PC-9 (cell line): ENCODE measurements at regions of chr13 and their contacts with region 1.

Region 1: DNA sequence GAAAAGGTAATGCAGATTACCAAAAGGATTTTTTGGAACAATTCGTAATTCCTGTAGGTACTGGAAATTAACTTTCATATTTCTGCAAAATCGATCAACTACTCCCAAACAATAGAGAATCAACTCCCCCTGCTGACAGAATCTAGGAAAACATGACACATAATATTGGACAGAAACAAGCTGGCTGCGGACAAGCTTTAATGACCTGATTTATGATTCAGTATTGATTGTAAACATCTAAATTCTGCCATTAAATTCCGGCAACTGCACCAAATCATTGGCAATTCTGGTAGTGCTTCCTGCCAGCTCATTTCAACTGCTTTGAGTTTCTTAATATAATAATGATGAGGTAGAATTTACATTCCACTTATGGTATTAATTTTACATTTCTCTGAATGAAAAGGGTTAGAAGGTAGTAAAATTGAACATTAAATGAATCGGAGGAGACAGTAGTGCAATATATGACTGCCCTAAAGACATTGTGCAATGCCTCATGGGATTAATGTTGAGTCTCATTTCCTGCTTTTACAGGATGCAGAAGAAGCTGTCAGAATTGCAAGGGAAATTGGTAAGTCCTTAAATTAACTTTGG is 146.5 kb downstream of the PCCA start:
- DNase-seq: peak; percentile 6 to 39
- H3K4me3 ChIP-seq: no peak overlapping the region
- H3K27ac ChIP-seq: no peak overlapping the region
- H3K4me1 ChIP-seq: peaks cover 5% of the 10 kb centered on the region; the same call in 1 of the 2 replicates
- H3K27me3 ChIP-seq: no peaks in the 10 kb centered on the region
- CTCF ChIP-seq: peak; percentile 88

Region 2: DNA sequence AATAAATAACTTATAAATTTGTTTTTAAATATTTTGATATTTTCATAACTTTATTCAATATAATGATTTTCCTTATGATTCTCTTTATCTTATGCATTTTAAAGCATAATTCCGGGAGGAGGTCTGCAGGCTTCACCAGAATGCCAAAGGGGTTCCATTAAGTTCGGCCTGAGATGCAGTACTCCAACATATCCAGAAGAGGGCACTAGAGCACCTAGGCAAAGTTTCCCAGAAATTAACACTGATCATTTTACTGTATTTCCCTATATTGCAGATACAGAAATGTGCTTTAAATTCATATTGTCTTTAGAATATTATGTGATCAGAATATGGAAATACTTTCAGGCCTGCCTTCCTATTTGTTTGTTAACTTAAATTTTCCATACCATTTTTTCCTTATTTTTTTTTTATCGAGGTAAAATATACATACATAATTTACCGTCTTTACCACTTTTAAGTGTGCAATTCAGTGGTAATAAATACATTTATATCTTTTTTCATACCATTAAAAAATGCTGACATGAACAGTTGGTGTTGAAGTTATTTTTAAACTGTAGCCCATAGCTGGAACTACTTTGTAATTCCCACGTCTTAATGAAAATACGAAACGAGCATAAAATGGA is 793.0 kb before region 1 on chr13:
- CTCF ChIA-PET with region 1: no interaction called
- POLR2A ChIA-PET with region 1: no interaction called
- intact Hi-C with region 1: loop called (anchors 5 kb)
- DNase-seq: peak; percentile 42 to 49
- H3K4me3 ChIP-seq: no peak overlapping the region
- H3K27ac ChIP-seq: no peak overlapping the region
- H3K4me1 ChIP-seq: peaks cover 19% of the 10 kb centered on the region
- H3K27me3 ChIP-seq: no peaks in the 10 kb centered on the region
- CTCF ChIP-seq: peak; percentile 96

Region 3: GRCh38 chr13:99656092-99656745 is 579.2 kb before region 1 on chr13:
- CTCF ChIA-PET with region 1: no interaction called
- POLR2A ChIA-PET with region 1: no interaction called
- intact Hi-C with region 1: loop called (anchors 2 kb)
- DNase-seq: peak; percentile 53 to 60
- H3K4me3 ChIP-seq: no peak overlapping the region
- H3K27ac ChIP-seq: no peak overlapping the region
- H3K4me1 ChIP-seq: no peaks in the 10 kb centered on the region
- H3K27me3 ChIP-seq: no peaks in the 10 kb centered on the region
- CTCF ChIP-seq: peak; percentile 96

Region 4: GRCh38 chr13:99916366-99917103 is 318.9 kb before region 1 on chr13:
- CTCF ChIA-PET with region 1: interaction called, 5 read pairs
- POLR2A ChIA-PET with region 1: no interaction called
- intact Hi-C with region 1: loop called (anchors 1 kb)
- DNase-seq: peak; percentile 34 to 71
- H3K4me3 ChIP-seq: no peak overlapping the region
- H3K27ac ChIP-seq: no peak overlapping the region
- H3K4me1 ChIP-seq: no peaks in the 10 kb centered on the region
- H3K27me3 ChIP-seq: no peaks in the 10 kb centered on the region
- CTCF ChIP-seq: peak; percentile 95

Region 5: DNA sequence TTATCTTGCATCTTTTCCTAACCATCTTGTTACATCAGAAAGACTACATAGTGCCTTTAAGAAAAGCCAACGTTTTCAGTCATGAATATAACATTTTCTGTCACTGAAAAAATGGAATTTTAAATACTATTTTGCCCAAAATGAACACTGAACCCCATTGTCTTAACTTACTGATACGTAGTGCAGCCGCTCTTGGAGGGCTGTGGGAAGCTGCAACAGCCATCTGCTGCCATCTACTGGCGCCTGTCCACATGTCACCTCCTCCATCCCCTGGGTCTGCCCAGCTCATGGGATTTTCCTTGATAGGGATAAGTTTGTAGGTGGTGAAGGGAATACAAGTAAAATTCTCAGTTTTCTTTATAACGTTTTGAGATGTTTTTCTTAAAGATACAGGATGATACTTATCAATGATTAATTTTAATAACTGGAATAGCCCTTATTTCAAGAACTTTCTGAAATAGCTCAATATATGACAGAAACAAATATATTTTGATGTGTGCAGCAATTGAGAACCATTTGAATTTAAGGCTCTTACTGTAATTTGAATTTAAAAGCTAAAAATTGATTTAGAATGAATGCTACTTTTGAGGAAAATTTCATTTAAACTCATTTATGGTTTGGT is 279.5 kb after region 1 on chr13:
- CTCF ChIA-PET with region 1: no interaction called
- POLR2A ChIA-PET with region 1: no interaction called
- intact Hi-C with region 1: loop called (anchors 2 kb)
- DNase-seq: peak; percentile 42 to 62
- H3K4me3 ChIP-seq: no peak overlapping the region
- H3K27ac ChIP-seq: no peak overlapping the region
- H3K4me1 ChIP-seq: no peaks in the 10 kb centered on the region
- H3K27me3 ChIP-seq: no peaks in the 10 kb centered on the region
- CTCF ChIP-seq: peak; percentile 97

Region 6: DNA sequence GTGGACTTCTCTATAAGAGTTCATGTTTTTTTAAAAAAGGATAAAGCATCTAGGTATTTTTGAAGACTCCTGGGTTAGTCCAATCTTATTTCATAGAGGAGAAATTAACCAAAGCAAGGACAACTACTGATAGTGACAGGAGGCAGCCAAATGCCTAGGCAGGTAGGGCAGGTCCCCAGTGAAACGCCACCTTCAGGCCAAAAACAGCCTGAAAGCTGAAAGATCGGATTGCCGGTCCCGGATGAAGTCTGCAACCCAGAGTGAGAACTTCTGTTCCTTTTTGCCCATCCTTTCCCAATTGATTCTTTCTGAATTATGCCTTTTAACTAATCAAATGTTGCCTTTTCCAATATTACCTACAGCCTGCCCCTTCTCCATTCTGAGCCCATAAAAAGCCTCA is 359.3 kb after region 1 on chr13:
- CTCF ChIA-PET with region 1: no interaction called
- POLR2A ChIA-PET with region 1: no interaction called
- intact Hi-C with region 1: loop called (anchors 5 kb)
- DNase-seq: no peak
- H3K4me3 ChIP-seq: no peak overlapping the region
- H3K27ac ChIP-seq: no peak overlapping the region
- H3K4me1 ChIP-seq: no peaks in the 10 kb centered on the region
- H3K27me3 ChIP-seq: no peaks in the 10 kb centered on the region
- CTCF ChIP-seq: peak; percentile 50

Region 7: DNA sequence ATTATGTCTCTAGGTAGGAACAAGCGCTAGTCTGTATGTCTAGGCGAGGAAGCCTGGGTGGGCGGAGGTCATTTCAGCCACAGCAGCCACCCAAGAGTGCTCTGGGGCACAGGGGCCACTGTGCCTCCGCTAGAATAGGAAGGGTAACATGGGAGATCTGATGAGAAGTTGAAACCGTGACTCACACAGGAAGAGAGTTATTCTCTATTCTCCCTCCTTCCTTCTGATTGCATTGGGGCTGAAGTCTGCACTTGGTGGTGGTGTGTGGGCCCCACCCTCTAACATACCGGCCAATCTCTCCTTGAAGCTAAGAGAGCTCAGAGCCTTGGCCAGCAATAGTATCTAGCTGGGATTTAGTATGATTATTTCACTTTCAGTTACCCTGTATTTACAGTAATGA is 373.5 kb after region 1 on chr13:
- CTCF ChIA-PET with region 1: interaction called, 11 read pairs
- POLR2A ChIA-PET with region 1: no interaction called
- intact Hi-C with region 1: no loop called
- DNase-seq: no peak
- H3K4me3 ChIP-seq: no peak overlapping the region
- H3K27ac ChIP-seq: no peak overlapping the region
- H3K4me1 ChIP-seq: no peaks in the 10 kb centered on the region
- H3K27me3 ChIP-seq: no peaks in the 10 kb centered on the region
- CTCF ChIP-seq: no peak